ENCODE measurements at regions of chr5 and their contacts with region 1.

Region 1: DNA sequence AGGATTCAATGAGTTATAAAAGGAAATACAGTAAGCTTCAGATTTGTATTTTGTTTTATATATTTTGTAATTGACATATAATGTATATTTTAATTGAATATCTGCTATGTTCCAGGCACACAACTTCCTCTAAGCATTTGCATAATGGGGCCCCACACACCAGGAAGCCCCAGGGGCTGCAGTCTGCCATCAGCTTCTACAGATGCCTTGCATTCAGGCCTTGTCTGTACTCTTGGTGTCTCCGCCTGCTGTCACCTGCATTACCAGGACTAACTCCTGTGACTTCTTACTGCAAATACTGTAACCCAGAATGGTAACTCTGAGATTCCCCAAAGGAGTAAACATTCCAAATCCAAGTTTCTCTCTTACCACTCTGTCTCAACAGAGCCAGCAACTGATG is 20.6 kb downstream of the ARL15 start:
- DNase-seq: no peak
- ATAC-seq: no peak
- H3K4me3 ChIP-seq: no peak overlapping the region
- H3K4me3 Mint-ChIP-seq: no peak overlapping the region
- H3K27ac ChIP-seq: no peak overlapping the region
- H3K27ac Mint-ChIP-seq: peak overlapping the region in 1 of 9 donors; percentile 5
- H3K4me1 ChIP-seq: no peaks in the 10 kb centered on the region
- H3K4me1 Mint-ChIP-seq: peaks cover 2 to 36% (median 20%) of the 10 kb centered on the region in 7 donors
- H3K27me3 ChIP-seq: no peaks in the 10 kb centered on the region
- H3K27me3 Mint-ChIP-seq: no peaks in the 10 kb centered on the region

Region 2: DNA sequence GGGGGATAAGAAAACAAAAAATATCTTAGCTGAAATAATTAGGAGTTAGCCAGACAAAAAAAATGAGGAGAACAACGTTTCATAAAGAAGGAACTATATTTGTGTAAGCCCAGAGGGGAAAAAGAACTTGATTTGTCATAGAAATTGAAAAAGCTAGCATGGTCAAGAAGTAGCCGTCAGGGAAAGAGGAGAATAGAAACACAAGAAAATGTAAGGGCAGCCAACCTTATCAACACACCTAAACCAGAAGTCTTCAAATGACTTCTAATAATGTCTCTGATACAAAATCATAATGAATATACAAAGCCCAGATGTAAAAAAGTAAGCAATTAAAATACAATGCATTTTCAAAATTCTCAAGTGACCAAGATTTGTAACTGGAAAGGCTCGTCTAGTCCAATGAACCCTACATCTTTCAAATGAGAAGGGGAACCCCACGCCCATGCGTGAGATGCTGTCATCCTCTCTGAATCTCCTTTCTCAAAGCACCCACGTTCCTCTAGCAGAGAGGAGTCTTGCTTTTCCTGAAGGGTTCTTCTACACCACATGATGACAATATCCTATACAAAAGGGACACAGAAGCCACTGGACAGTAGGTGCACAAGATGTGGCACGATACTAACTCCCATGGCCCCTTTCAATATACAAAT is 83.1 kb before region 1 on chr5:
- CTCF ChIA-PET with region 1: no interaction called
- POLR2A ChIA-PET with region 1: no interaction called
- intact Hi-C with region 1: no loop called
- DNase-seq: no peak
- ATAC-seq: no peak
- H3K4me3 ChIP-seq: no peak overlapping the region
- H3K4me3 Mint-ChIP-seq: no peak overlapping the region
- H3K27ac ChIP-seq: no peak overlapping the region
- H3K27ac Mint-ChIP-seq: no peak overlapping the region
- H3K4me1 ChIP-seq: no peaks in the 10 kb centered on the region
- H3K4me1 Mint-ChIP-seq: peaks cover 0 to 46% (median 11%) of the 10 kb centered on the region in 7 donors
- H3K27me3 ChIP-seq: no peaks in the 10 kb centered on the region
- H3K27me3 Mint-ChIP-seq: no peaks in the 10 kb centered on the region

Region 3: DNA sequence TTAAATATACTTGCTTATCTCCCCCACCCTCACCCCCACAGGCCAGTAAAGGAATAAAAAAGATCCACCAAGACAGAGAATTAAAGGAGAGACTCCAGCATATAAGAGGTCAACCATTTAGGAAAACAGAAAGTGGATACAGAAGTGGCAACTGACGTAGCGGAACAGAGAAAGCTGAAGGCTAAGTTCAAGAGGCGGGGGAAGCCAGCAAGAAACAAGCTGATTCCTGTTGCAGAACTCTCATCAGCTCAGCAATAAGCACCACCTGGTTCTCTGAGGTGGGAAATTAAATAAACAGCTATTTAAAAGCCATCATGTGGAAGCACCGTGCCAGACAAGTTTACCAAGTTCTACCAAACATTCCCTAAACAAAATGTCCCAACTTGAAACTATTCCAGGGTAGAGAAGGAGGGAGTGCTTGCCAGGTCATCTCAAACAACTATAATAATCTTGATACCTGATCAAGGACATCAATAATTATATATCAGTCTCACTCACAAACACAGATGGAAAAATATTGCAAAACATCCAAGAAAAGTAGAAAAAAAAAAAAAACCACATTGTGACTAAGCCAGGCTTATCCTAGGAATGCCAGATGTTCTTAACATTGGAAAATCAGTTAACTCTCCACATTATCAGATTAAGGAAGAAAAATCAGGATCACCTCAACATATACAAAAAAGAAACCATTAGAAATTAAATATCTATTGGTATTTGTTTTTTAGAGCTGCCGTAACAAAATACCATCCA is 27.9 kb after region 1 on chr5:
- CTCF ChIA-PET with region 1: no interaction called
- POLR2A ChIA-PET with region 1: no interaction called
- intact Hi-C with region 1: no loop called
- DNase-seq: no peak
- ATAC-seq: no peak
- H3K4me3 ChIP-seq: no peak overlapping the region
- H3K4me3 Mint-ChIP-seq: no peak overlapping the region
- H3K27ac ChIP-seq: no peak overlapping the region
- H3K27ac Mint-ChIP-seq: peak overlapping the region in 1 of 9 donors; percentile 7
- H3K4me1 ChIP-seq: no peaks in the 10 kb centered on the region
- H3K4me1 Mint-ChIP-seq: peaks cover 0 to 4% (median 0%) of the 10 kb centered on the region in 7 donors
- H3K27me3 ChIP-seq: no peaks in the 10 kb centered on the region
- H3K27me3 Mint-ChIP-seq: peaks cover 13 to 66% (median 31%) of the 10 kb centered on the region in 5 donors

Region 4: GRCh38 chr5:55278778-55279177 is 989.0 kb after region 1 on chr5:
- CTCF ChIA-PET with region 1: no interaction called
- POLR2A ChIA-PET with region 1: interaction called, 10 read pairs
- intact Hi-C with region 1: no loop called
- DNase-seq: no peak
- ATAC-seq: no peak
- H3K4me3 ChIP-seq: no peak overlapping the region
- H3K4me3 Mint-ChIP-seq: no peak overlapping the region
- H3K27ac ChIP-seq: no peak overlapping the region
- H3K27ac Mint-ChIP-seq: no peak overlapping the region
- H3K4me1 ChIP-seq: no peaks in the 10 kb centered on the region
- H3K4me1 Mint-ChIP-seq: no peaks in the 10 kb centered on the region
- H3K27me3 ChIP-seq: no peaks in the 10 kb centered on the region
- H3K27me3 Mint-ChIP-seq: no peaks in the 10 kb centered on the region